Stomach (tissue), 19 donors: ENCODE measurements at regions of chr6 and their contacts with region 1.

Region 1: GRCh38 chr6:90383196-90383822 is 86.7 kb upstream of the BACH2 start:
- DNase-seq: no peak
- H3K4me3 ChIP-seq: no peak overlapping the region
- H3K27ac ChIP-seq: no peak overlapping the region
- H3K4me1 ChIP-seq: no peaks in the 10 kb centered on the region
- H3K27me3 ChIP-seq: peaks cover 0 to 27% (median 0%) of the 10 kb centered on the region in 3 donors
- CTCF ChIP-seq: no peak
- EP300 ChIP-seq: no peak
- POLR2A ChIP-seq: no peak

Region 2: GRCh38 chr6:90304308-90304707 is 79.0 kb before region 1 on chr6:
- intact Hi-C with region 1: loop called (anchors 10 kb)
- DNase-seq: no peak
- H3K4me3 ChIP-seq: no peak overlapping the region
- H3K27ac ChIP-seq: no peak overlapping the region
- H3K4me1 ChIP-seq: no peaks in the 10 kb centered on the region
- H3K27me3 ChIP-seq: peaks cover 0 to 11% (median 0%) of the 10 kb centered on the region in 3 donors
- CTCF ChIP-seq: no peak
- EP300 ChIP-seq: no peak
- POLR2A ChIP-seq: no peak

Region 3: DNA sequence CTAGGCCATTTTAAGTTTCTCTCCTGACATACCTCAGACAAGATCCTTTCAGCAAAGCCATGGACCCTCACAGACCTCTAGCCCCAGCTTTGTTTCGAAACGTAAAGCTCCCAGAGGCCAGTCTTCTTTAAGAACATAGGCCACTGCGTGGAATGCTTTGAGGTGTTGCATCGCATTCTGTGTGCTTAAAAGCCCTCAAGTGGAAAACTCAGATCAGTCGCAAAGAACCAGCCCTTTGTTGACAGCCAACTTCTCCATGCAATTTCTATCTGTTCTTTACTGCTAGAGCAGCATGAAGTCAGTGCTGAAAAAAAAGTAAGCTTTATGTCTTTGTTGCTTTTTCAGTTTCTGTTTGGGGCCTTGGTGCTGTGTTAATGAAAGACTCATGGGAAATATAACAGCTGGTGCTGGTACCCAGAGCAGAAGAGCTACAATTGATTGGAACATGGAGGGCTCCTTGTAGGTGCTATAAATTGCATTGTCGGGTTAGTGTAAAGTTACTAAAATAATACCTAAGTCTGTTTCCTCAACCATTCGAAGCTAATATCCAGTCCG is 60.9 kb after region 1 on chr6:
- intact Hi-C with region 1: no loop called
- DNase-seq: peak in 1 of 2 donors; percentile 15
- H3K4me3 ChIP-seq: no peak overlapping the region
- H3K27ac ChIP-seq: no peak overlapping the region
- H3K4me1 ChIP-seq: no peaks in the 10 kb centered on the region
- H3K27me3 ChIP-seq: no peaks in the 10 kb centered on the region
- CTCF ChIP-seq: no peak
- EP300 ChIP-seq: no peak
- POLR2A ChIP-seq: no peak